Motor neuron (in vitro differentiated cells): ENCODE measurements at regions of chr4 and their contacts with region 1.

Region 1: GRCh38 chr4:89029591-89029990 is 27.4 kb downstream of the FAM13A start:
- ATAC-seq: no peak
- H3K4me3 ChIP-seq: no peak overlapping the region
- H3K27ac ChIP-seq: no peak overlapping the region
- H3K4me1 ChIP-seq: no peaks in the 10 kb centered on the region

Region 2: GRCh38 chr4:88706574-88706973 is 323.0 kb before region 1 on chr4:
- in situ Hi-C with region 1: loop called in 3 of 9 experiments (anchors 25 kb)
- ATAC-seq: peak in 5 of 8 experiments; percentile 37 to 95 (median 92)
- H3K4me3 ChIP-seq: no peak overlapping the region
- H3K27ac ChIP-seq: no peak overlapping the region
- H3K4me1 ChIP-seq: no peaks in the 10 kb centered on the region